Activated naive CD4-positive, alpha-beta T cell treated with anti-CD3 and anti-CD28 coated beads, Interleukin-2, amount 10 ng/mL, durations not matched to agents 7 days and 5 days (primary cell): ENCODE measurements at regions of chr9 and their contacts with region 1.

Region 1: GRCh38 chr9:34646211-34647083 is at the start of gene GALT:
- DNase-seq: peak; percentile 99
- H3K4me3 Mint-ChIP-seq: peak within 1 kb of the TSS; percentile 97
- H3K27ac Mint-ChIP-seq: peak within 1 kb of the TSS; percentile 91
- H3K4me1 Mint-ChIP-seq: peaks cover 34% of the 10 kb centered on the region
- H3K27me3 Mint-ChIP-seq: no peaks in the 10 kb centered on the region

Region 2: DNA sequence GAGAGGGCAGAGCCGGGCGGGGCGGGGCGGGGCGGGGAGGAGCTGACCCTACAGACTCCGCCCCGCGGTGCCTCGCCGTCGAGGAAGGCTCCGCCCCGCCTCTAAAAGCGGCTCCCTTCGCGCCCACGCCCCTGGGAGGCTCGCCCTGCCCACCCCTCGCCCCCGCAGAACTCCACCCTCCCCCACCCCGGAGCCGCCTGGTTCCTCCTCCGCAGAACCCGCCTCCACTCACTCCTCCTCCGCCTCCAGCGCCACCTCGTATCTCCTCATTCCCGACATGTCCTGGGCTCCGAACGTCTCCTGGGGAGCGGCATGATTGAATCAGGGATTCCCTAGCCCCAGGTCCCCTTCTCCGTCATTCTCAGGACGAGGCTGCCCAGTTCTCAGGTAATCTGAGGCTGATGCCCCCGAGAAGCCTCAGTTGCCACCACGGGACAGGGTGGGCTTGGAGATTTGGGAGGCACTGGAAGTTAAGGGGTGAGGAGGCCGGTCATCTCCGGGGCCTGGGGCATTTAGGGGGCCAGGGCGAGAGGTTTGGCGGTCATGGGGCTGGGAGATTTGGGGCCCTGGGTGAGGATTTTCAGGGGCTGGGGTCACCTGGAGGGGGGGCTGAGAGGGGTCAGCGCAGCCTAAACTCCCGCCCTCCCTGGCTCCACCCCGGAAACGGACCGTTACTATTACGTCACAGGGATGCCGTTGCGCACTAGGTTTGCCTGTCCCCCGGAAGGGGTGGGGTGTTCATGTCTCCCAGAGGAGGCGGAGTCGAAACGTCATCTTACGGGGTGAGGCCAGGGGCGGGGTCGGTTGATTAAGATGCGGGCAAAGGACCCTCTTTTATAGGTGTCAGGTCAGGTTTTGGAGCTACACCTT is 19.2 kb after region 1 on chr9:
- CTCF ChIA-PET with region 1: interaction called, 36 read pairs
- DNase-seq: peak; percentile 92
- H3K4me3 Mint-ChIP-seq: peak overlapping the region; percentile 85
- H3K27ac Mint-ChIP-seq: peak overlapping the region; percentile 93
- H3K4me1 Mint-ChIP-seq: peaks cover 49% of the 10 kb centered on the region
- H3K27me3 Mint-ChIP-seq: peaks cover 15% of the 10 kb centered on the region